Activated B cell treated with CpG ODN at 0.5 μM for 24 hours (primary cell): ENCODE measurements at regions of chr19 and their contacts with region 1.

Region 1: DNA sequence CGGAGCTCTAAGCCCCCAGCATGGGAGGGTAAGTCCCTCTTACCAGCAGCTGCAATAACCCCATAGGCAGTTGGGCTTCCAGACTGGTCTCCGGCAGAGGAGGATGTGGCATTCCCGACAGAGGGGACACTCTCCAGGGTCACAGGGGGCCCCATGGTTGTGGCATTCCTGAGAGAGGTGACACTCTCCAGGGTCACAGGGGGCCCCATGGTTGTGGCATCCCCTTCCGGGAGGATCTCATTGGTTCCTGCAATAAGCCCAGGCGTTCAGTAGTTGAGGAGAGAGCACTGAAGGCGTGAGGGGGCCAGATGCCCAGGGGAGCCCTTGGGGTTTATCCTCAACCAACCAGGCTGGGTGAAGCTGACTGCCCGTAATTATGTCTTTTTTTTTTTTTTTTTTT is 5.4 kb downstream of the CD320 start:
- DNase-seq: peak; percentile 13
- ATAC-seq: no peak
- H3K4me3 Mint-ChIP-seq: no peak overlapping the region
- H3K27ac Mint-ChIP-seq: no peak overlapping the region
- H3K4me1 Mint-ChIP-seq: peaks cover 17% of the 10 kb centered on the region
- H3K27me3 Mint-ChIP-seq: no peaks in the 10 kb centered on the region
- CTCF ChIP-seq: no peak

Region 2: GRCh38 chr19:7263521-7263920 is 1039.2 kb before region 1 on chr19:
- CTCF ChIA-PET with region 1: no interaction called
- POLR2A ChIA-PET with region 1: interaction called, 10 read pairs
- intact Hi-C with region 1: no loop called
- DNase-seq: no peak
- ATAC-seq: no peak
- H3K4me3 Mint-ChIP-seq: no peak overlapping the region
- H3K27ac Mint-ChIP-seq: no peak overlapping the region
- H3K4me1 Mint-ChIP-seq: no peaks in the 10 kb centered on the region
- H3K27me3 Mint-ChIP-seq: no peaks in the 10 kb centered on the region
- CTCF ChIP-seq: no peak

Region 3: DNA sequence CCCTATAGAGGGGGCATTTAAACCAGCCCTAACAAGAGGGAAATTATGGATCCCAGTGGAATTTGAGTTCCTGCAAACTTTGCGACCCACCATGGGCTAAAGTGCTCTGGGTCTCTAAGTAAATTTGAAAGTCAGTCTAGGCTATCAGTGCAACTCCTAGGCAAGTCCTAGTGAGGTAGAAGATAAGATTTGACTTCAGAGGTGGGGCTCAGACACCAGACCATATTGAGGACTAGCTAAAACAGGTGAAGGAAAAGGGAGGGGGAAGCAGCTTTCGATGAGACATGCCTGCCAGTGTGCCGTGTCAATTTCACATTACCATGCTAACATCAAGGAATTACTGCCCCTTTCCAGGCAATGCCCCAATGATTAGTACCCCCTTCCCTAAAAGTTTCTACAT is 33.0 kb before region 1 on chr19:
- CTCF ChIA-PET with region 1: no interaction called
- POLR2A ChIA-PET with region 1: interaction called, 12 read pairs
- intact Hi-C with region 1: no loop called
- DNase-seq: no peak
- ATAC-seq: no peak
- H3K4me3 Mint-ChIP-seq: peak overlapping the region; percentile 89
- H3K27ac Mint-ChIP-seq: peak overlapping the region; percentile 96
- H3K4me1 Mint-ChIP-seq: peaks cover 20% of the 10 kb centered on the region
- H3K27me3 Mint-ChIP-seq: no peaks in the 10 kb centered on the region
- CTCF ChIP-seq: no peak

Region 4: GRCh38 chr19:8377598-8377997 is 74.9 kb after region 1 on chr19:
- CTCF ChIA-PET with region 1: no interaction called
- POLR2A ChIA-PET with region 1: no interaction called
- intact Hi-C with region 1: no loop called
- DNase-seq: no peak
- ATAC-seq: no peak
- H3K4me3 Mint-ChIP-seq: no peak overlapping the region
- H3K27ac Mint-ChIP-seq: no peak overlapping the region
- H3K4me1 Mint-ChIP-seq: no peaks in the 10 kb centered on the region
- H3K27me3 Mint-ChIP-seq: no peaks in the 10 kb centered on the region
- CTCF ChIP-seq: no peak